ENCODE measurements at regions of chr7 and their contacts with region 1.

Region 1: DNA sequence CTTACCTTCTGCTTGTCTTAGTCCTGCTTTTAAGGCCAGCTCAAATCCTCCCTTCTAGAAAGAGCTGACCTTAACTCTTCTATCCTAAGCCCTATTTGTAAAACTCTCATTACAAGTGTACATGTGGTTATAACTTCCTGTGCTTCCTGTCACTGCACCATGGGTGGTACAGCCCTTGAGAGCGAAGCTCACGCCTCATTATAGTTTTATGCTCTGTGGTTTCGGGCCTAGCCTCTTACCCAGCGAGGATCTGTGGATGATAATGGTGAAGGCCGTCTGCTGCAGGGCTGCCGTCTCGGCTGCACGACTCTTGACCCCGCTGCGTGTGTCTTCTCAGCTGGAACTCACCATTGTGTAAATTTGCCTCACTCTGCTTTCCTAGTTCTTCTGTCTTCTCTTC is 74.6 kb downstream of the CUL1 start:
- DNase-seq: peak; percentile 60
- ATAC-seq: peak; percentile 83
- H3K4me3 Mint-ChIP-seq: no peak overlapping the region
- H3K27ac Mint-ChIP-seq: peak overlapping the region; percentile 90
- H3K4me1 Mint-ChIP-seq: peaks cover 19% of the 10 kb centered on the region
- H3K27me3 Mint-ChIP-seq: no peaks in the 10 kb centered on the region
- CTCF ChIP-seq: no peak

Region 2: DNA sequence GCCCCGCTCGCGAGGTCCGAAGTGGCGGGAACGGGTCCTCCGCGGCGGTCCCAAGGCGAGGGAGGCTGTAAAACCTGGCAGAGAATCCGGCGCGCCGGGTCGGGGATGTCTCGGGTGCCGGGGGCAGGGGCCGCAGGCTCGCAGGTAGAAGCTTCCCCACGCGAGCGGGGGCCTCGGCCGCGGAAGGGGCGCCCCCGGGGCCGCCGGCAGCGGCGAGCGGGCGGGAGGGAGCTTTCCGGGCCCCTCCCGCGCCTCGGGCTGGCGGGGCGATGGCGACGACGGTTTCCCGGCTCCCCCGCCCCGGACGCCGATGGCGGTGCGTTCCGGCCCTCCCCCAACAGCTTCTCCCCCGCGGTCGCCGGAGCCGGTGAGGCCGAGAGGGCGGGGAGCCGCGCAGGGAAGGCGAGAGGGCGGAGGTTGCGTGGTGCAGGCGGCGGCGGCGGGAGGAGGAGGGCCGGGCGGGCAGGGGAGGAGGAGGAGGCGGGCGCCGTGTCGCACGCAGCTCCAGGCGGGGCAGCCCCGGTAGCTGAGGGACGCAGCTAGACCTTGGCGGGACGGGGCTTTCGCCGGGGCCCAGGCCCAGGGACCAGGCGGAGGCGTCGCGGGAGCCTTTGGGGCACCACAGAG is 74.8 kb before region 1 on chr7 and contains the start of gene CUL1:
- CTCF ChIA-PET with region 1: interaction called, 3 read pairs
- POLR2A ChIA-PET with region 1: interaction called, 10 read pairs
- intact Hi-C with region 1: no loop called
- DNase-seq: peak; percentile 81
- ATAC-seq: peak; percentile 70
- H3K4me3 Mint-ChIP-seq: peak within 1 kb of the TSS; percentile 84
- H3K27ac Mint-ChIP-seq: peak within 1 kb of the TSS; percentile 95
- H3K4me1 Mint-ChIP-seq: peaks cover 50% of the 10 kb centered on the region
- H3K27me3 Mint-ChIP-seq: no peaks in the 10 kb centered on the region
- CTCF ChIP-seq: no peak
- total RNA-seq, gene CUL1: 60.6 to 61.2 TPM